Psoas muscle (tissue), 8 donors: ENCODE measurements at regions of chr2 and their contacts with region 1.

Region 1: DNA sequence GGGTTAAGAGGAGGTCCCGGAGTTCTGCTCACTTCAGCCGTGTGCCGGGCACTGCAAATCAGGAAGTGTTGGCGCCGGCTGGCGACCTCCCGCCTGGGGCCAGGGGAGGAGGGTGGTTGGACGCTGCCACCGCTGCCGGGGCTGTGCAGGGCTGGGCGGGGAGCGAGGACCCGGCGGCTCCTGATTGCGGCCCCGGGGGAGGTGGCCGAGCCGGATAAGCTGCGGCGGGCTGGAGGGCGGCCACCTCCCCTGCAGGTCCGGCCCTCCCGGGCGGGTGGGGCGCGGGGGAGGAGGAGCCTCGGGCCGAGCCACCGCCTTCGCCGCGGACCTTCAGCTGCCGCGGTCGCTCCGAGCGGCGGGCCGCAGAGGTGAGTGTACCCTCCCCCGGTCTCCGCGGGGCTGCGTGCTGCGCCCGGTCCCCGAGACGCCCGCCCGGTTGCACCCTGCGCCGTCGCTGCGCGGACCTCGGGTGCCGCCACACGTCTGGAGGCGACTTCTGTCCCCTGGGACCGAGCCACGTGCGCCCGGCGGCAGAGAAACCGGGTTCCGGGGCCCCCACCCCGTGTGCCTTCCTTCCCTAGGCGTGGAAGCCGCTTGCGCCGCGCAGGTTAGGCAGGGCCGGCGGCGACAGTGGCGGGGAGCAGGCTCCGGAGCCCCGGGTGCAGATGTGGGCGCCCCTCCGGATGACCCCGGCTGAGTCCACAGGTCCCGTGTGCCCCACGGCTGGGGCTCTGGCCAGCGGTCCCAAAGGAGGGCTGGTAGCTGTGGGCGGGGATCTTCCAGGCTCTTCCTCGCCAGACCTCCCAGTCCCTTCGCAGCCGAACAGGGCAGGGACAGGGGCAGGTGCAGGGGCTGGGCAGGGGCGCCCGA is at the start of gene STEAP3:
- DNase-seq: peak; percentile 86 to 91
- ATAC-seq: peak; percentile 89 to 95 (median 94)
- H3K4me3 ChIP-seq: peak within 1 kb of the TSS; percentile 97
- H3K27ac ChIP-seq: peak within 1 kb of the TSS; percentile 99
- H3K4me1 ChIP-seq: peaks cover 23% of the 10 kb centered on the region
- H3K27me3 ChIP-seq: no peaks in the 10 kb centered on the region
- CTCF ChIP-seq: no peak
- total RNA-seq, gene STEAP3: 12.3 to 47.4 (median 22.8) TPM

Region 2: GRCh38 chr2:119066272-119066804 is 157.4 kb before region 1 on chr2:
- intact Hi-C with region 1: no loop called
- DNase-seq: no peak
- ATAC-seq: no peak
- H3K4me3 ChIP-seq: no peak overlapping the region
- H3K27ac ChIP-seq: no peak overlapping the region
- H3K4me1 ChIP-seq: no peaks in the 10 kb centered on the region
- H3K27me3 ChIP-seq: no peaks in the 10 kb centered on the region
- CTCF ChIP-seq: no peak

Region 3: GRCh38 chr2:119264781-119265692 is 41.3 kb after region 1 on chr2:
- intact Hi-C with region 1: loop called (anchors 2 to 5 kb)
- DNase-seq: peak; percentile 41 to 68
- ATAC-seq: peak; percentile 93 to 98 (median 94)
- H3K4me3 ChIP-seq: no peak overlapping the region
- H3K27ac ChIP-seq: no peak overlapping the region
- H3K4me1 ChIP-seq: peaks cover 5% of the 10 kb centered on the region
- H3K27me3 ChIP-seq: no peaks in the 10 kb centered on the region
- CTCF ChIP-seq: peak; percentile 80

Region 4: DNA sequence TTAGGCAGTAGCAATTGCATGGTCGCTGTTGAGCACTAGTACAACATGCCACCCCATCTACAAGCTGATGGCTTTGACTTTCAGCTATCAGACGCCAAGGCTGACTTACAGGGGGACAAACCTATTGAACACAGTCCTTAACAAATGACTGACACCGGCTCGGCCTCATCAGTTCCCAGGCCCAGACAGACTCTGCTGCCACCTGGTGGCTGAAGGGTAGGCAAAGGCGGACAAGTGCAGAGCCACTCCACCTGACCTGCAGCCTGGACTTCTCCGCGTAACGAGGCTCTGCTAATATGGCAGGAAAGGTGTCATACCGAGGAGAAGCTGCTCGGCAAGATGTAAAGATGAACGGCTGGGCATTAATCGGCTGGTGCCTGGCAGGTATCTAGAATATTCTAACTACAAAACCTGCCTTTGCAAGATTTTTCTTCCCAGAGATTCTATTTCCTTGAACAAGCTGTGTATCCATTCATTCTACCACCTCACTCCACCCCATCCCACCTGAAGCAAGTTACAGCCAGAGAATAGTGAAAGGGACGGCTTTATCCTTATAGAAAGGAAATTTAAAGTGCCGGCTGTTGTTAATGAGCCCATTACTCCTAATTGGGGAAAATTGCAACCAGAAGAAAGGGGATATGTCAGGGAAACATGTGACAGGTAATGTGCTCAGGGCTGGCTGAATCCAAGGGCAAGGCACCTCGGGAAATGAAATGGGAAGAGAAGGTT is 67.3 kb after region 1 on chr2:
- intact Hi-C with region 1: loop called (anchors 2 to 10 kb)
- DNase-seq: peak; percentile 74 to 86
- ATAC-seq: peak; percentile 83 to 85 (median 83)
- H3K4me3 ChIP-seq: no peak overlapping the region
- H3K27ac ChIP-seq: no peak overlapping the region
- H3K4me1 ChIP-seq: peaks cover 12% of the 10 kb centered on the region
- H3K27me3 ChIP-seq: no peaks in the 10 kb centered on the region
- CTCF ChIP-seq: peak; percentile 85

Region 5: GRCh38 chr2:119487434-119488244 is 263.9 kb after region 1 on chr2:
- intact Hi-C with region 1: loop called in 1 of 2 experiments (anchors 10 kb)
- DNase-seq: no peak
- ATAC-seq: no peak
- H3K4me3 ChIP-seq: no peak overlapping the region
- H3K27ac ChIP-seq: peak overlapping the region; percentile 71
- H3K4me1 ChIP-seq: peaks cover 66% of the 10 kb centered on the region
- H3K27me3 ChIP-seq: no peaks in the 10 kb centered on the region
- CTCF ChIP-seq: no peak